ENCODE measurements at regions of chr6 and their contacts with region 1.

Region 1: GRCh38 chr6:5143634-5144311 is 58.6 kb downstream of the PPP1R3G start:
- DNase-seq: peak; percentile 76 to 98 (median 93)

Region 2: DNA sequence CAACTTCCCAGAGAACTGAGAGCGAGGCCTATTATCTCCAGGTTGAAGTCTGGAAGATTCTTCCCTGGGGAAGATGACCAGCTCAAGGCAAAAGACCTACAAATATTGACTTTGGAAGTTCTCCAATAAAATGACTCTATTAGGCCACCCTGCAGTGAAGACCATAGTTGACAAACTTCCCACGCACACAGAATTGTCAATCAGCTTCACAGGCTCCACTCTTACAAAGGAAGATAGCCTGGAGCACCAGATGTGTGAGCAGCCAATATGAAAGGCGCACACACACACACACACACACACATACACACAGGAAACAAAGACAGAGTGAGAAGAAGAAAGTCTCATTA is 1180.8 kb before region 1 on chr6:
- intact Hi-C with region 1: no loop called
- DNase-seq: no peak

Region 3: GRCh38 chr6:5214570-5215052 is 70.8 kb after region 1 on chr6:
- intact Hi-C with region 1: loop called (anchors 5 kb)
- DNase-seq: peak; percentile 45 to 96 (median 63)

Region 4: DNA sequence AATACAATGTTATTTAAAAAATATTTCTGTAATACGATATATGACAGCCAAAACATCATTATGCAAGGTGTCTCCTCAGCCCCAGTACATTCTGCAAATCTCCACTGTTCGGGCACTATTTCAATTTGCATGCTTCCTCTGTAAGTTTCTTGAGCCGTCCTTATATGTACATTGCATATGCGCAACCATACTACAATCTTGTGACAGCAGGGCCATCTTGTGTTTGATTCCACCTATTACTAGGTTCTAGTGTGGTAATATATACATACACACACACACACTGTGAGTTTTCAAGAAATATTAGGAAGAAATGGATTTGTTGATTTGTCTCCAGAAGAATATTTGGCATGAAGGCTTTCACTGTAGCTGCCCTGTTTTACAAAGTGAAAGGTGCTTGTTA is 107.1 kb after region 1 on chr6:
- intact Hi-C with region 1: loop called (anchors 5 kb)
- DNase-seq: no peak

Region 5: GRCh38 chr6:5398530-5398929 is 254.8 kb after region 1 on chr6:
- intact Hi-C with region 1: loop called (anchors 5 kb)
- DNase-seq: no peak